ENCODE measurements at regions of chr11 and their contacts with region 1.

Region 1: DNA sequence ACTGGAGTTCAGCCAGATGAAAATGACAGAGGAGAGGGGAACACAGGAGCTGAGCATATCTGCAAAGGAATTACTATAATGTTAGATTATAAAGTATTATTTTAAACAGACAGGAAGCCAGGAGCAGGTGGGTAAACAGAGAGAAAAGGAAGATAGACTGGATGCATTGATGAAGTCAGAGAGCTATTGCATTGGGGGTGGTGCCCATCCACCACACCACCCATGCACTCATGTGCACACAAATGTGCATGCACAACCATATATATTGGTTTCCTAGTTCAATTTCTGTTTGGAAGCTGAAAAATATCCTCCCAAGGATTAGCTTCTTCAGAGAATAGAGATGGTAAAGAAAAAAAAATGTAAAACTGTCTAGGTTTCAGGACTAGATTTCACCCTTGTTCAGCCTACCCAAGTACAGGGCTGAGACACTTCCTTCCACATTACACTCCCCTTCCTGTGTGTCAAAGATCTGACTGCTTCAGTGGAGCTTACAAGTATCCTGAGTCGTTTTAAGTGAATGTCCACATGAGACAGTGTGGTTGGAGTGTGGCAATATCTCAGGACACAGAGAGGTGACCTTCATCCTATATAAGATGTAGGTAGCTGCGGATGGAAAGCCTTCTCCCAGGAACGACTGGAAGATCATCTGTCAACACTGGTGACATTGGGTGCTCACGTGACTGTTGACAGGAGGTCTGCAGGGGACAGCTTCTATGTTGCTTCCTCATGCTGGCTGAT is 12.2 kb upstream of the SMPD1 start:
- DNase-seq: no peak

Region 2: DNA sequence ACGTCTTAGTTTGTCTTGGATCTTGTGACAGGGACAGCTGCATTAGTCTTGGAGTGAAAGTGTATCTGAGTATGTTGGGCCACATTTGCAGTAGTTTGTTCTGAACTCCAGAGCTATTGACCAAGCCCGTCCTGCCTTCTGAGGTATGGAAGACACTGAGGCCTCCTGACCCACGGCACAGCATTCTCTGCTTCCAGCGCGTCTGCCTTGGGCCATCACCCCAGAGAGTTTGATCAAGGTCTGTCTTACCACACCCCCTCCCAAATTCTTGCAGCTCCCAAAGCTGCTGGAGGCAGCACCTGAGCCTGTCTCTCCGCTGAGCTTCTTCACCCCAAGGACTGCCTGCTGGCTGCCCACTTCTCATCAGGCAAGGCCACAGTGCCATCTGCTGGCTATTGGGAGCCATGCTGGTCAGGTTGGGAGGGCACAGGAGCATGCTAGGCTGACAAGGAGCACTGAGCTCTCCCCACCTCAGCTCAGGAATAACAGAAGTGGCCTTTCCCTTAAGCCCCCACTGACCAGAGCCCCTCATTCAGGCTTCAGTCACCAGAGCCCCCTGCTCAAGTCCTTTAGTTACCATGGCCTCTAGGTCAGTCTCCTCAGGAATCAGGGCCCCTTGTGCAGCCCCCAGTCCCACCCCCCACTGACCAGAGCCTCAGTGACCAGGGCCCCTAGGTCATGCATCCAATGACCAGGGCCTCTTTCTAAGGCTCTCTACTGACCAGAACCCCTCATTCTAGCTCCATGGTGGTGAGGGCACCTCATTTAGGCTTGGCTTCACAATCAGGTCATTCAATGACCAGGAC is 15.0 kb before region 1 on chr11:
- CTCF ChIA-PET with region 1: interaction called, 28 read pairs
- POLR2A ChIA-PET with region 1: no interaction called
- DNase-seq: peak; percentile 81

Region 3: DNA sequence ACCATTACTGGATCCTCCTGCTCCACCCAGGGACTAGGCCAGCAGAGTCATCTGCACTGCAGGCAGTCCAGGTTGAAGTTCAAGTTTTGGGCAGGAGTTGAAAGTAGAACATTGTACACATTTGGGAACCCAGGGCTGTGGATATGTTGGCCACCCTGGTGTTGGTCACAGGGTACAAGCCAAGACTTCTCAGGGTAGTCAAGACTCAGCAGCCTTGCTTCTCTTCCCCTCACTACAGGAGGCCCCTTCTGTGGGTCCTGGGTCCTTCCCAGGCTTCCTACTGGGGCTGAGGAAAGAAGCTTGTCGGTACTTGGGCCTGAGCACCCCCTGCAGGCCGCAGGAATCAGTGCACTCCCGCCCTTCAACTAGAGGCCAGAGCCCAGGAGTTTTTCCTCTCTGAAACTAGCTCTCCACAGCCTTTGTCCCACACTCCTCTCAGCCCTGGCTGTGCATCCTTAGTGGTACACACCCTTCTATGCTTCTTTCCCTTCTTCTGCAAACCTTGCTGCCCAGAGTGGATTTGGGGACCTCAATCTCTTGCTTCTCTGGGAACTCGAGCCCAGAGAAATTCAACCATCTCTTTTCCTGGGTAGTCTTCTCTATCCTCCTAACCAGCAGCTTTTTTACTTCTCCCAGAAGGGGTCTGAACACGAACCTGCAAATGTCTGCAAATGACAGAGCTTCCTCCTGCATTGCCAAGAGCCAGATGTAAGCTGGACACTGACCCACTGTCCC is 65.4 kb after region 1 on chr11:
- CTCF ChIA-PET with region 1: interaction called, 102 read pairs
- POLR2A ChIA-PET with region 1: interaction called, 6 read pairs
- DNase-seq: peak; percentile 74

Region 4: GRCh38 chr11:6516865-6517264 is 138.8 kb after region 1 on chr11:
- CTCF ChIA-PET with region 1: no interaction called
- POLR2A ChIA-PET with region 1: no interaction called
- DNase-seq: no peak

Region 5: GRCh38 chr11:6705905-6706535 is 327.9 kb after region 1 on chr11:
- CTCF ChIA-PET with region 1: interaction called, 10 read pairs
- POLR2A ChIA-PET with region 1: no interaction called
- DNase-seq: peak; percentile 58